ENCODE measurements at regions of chr14 and their contacts with region 1.

Region 1: GRCh38 chr14:73472185-73473114 is 14.1 kb upstream of the NUMB start:
- DNase-seq: no peak
- ATAC-seq: peak; percentile 93
- H3K4me3 Mint-ChIP-seq: no peak overlapping the region
- H3K27ac Mint-ChIP-seq: no peak overlapping the region
- H3K4me1 Mint-ChIP-seq: peaks cover 9% of the 10 kb centered on the region
- H3K27me3 Mint-ChIP-seq: no peaks in the 10 kb centered on the region
- CTCF ChIP-seq: no peak

Region 2: GRCh38 chr14:73173092-73173735 is 299.2 kb before region 1 on chr14:
- CTCF ChIA-PET with region 1: interaction called, 15 read pairs
- POLR2A ChIA-PET with region 1: no interaction called
- intact Hi-C with region 1: loop called (anchors 1 kb)
- DNase-seq: no peak
- ATAC-seq: no peak
- H3K4me3 Mint-ChIP-seq: no peak overlapping the region
- H3K27ac Mint-ChIP-seq: no peak overlapping the region
- H3K4me1 Mint-ChIP-seq: no peaks in the 10 kb centered on the region
- H3K27me3 Mint-ChIP-seq: no peaks in the 10 kb centered on the region
- CTCF ChIP-seq: no peak

Region 3: DNA sequence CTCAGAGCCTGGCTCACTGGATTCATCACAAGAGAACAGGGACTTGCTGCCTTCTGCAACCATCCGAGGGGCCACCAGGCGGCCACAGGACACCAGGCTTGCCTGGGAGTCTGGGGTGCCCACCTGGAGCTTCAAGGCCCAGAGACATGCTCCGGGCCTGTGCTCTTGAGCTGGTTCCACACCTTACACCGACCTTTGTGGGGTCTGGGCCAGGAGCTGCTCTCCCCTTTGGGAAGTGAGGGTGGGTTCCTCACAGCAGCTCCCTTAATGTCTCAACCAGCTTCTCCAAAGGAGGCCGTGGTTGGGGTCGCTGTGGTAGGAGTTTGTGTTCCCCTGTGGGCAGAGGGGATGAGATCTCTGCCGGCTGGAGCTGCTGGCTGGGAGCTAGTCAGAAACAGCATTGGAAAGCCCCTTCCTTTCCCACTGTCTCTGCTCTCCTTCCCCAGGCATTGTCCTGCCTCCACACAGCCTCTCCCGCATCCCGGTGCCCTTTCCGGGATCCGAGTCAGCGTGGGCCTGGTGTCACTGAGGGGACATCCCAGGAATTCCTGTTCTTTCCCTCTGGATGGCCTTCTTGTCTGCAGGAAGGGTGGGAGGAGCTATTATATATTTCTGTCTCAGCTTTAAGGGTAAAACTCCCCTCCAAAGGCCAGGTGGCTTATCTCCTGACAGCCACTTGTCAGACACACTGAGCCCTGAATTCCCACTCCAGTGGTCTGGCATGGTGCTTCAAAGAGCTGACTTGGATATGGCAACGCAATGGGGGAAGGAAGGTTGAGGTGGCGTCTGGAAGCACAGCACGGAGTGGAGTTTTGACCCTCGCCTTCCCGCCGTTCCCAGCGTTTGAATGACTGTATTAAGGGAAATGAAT is 240.2 kb before region 1 on chr14:
- CTCF ChIA-PET with region 1: interaction called, 7 read pairs
- POLR2A ChIA-PET with region 1: no interaction called
- intact Hi-C with region 1: loop called (anchors 1 kb)
- DNase-seq: no peak
- ATAC-seq: no peak
- H3K4me3 Mint-ChIP-seq: no peak overlapping the region
- H3K27ac Mint-ChIP-seq: no peak overlapping the region
- H3K4me1 Mint-ChIP-seq: peaks cover 20% of the 10 kb centered on the region
- H3K27me3 Mint-ChIP-seq: peaks cover 28% of the 10 kb centered on the region
- CTCF ChIP-seq: no peak

Region 4: DNA sequence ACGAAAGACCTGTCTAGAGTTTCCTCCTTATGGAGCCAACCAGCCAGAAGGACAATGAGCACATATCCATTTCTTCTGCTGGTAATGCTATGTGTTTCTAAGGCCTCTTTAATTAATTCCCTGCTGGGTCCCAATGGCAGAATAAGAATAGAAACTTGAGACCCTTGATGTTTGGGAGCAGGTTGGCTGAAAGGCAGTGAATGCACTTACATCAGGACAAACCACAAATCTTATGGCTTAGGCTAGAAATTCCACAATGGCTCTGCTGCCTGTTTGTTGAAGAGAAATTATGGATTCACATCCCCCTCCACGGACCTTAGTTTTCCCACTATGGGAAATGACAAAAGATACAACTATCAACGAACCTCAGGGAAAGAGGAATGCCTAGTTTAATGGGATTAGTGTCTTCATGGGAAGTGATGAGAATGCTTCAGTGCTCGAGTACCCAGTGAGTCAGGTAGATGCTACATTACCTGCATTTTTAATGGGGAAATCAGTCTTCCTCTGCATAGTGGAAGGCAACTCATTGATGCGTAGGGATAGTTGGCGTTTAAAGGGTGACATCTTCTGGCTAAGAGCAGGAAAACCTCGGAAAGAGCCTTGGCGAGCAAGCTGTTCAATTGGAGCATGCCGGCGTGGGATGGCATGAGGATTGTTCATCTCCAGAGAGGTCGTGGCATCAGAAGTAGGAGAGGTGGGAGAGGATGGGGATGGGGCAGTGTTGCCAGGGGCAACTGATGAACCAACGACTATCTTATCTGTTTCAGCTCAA is 188.7 kb before region 1 on chr14:
- CTCF ChIA-PET with region 1: interaction called, 4 read pairs
- POLR2A ChIA-PET with region 1: interaction called, 10 read pairs
- intact Hi-C with region 1: no loop called
- DNase-seq: no peak
- ATAC-seq: no peak
- H3K4me3 Mint-ChIP-seq: no peak overlapping the region
- H3K27ac Mint-ChIP-seq: no peak overlapping the region
- H3K4me1 Mint-ChIP-seq: no peaks in the 10 kb centered on the region
- H3K27me3 Mint-ChIP-seq: no peaks in the 10 kb centered on the region
- CTCF ChIP-seq: no peak

Region 5: GRCh38 chr14:73295198-73295796 is 177.2 kb before region 1 on chr14:
- CTCF ChIA-PET with region 1: interaction called, 205 read pairs
- POLR2A ChIA-PET with region 1: interaction called, 18 read pairs
- intact Hi-C with region 1: loop called (anchors 1 kb)
- DNase-seq: no peak
- ATAC-seq: peak; percentile 60
- H3K4me3 Mint-ChIP-seq: no peak overlapping the region
- H3K27ac Mint-ChIP-seq: no peak overlapping the region
- H3K4me1 Mint-ChIP-seq: peaks cover 2% of the 10 kb centered on the region
- H3K27me3 Mint-ChIP-seq: no peaks in the 10 kb centered on the region
- CTCF ChIP-seq: peak; percentile 33

Region 6: GRCh38 chr14:73458151-73458976 is 14.1 kb before region 1 on chr14 and contains the start of gene NUMB:
- CTCF ChIA-PET with region 1: interaction called, 5 read pairs
- POLR2A ChIA-PET with region 1: interaction called, 17 read pairs
- intact Hi-C with region 1: loop called (anchors 2 kb)
- DNase-seq: peak; percentile 74
- ATAC-seq: peak; percentile 97
- H3K4me3 Mint-ChIP-seq: peak within 1 kb of the TSS; percentile 96
- H3K27ac Mint-ChIP-seq: peak within 1 kb of the TSS; percentile 92
- H3K4me1 Mint-ChIP-seq: peaks cover 52% of the 10 kb centered on the region
- H3K27me3 Mint-ChIP-seq: no peaks in the 10 kb centered on the region
- CTCF ChIP-seq: no peak
- total RNA-seq, gene NUMB: 69.5 and 71.4 TPM in 2 replicates